ENCODE measurements at regions of chr11 and their contacts with region 1.

Region 1: DNA sequence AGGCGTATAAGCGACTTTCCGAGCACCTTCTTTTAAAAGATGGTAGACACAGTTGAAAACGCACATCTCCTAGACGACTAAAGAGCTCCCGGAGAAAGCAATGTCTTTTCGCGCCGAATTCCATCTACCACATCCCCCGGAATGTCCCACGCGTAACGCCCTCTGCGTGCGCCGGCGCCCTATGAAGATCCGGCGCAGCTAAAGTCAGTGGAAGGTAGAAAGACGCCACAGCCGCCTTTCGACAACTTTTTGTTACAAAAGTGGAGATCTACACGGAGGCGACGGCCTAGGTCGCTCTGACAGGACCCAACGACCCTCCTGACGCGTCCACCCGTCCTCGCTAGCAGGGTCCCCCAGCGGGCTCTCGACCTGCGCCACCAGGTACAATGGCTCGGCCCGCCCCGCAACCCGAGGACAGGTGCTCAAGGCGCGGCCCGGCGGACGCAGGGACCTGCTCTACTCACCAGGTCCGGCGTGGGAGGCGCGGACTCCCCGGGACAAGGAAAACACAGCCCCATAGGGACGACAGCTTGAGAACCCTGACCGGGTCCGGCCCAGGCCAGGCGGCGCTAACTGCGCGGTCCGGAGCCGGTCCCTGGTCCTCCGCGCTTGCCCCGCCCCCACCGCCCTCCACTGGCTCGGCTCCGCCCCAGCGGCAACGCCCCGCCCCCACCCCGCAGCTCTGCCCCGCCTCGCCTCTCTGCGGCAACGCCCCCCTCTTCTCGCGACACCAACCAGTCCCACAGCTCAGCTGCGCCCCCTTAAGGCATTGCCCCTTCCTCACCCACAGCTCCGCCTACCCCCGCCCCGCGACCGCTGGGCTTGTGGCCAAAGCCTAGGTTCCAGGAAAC is at the start of gene SVIP:
- DNase-seq: peak; percentile 93
- H3K4me3 Mint-ChIP-seq: peak within 1 kb of the TSS; percentile 91
- H3K27ac Mint-ChIP-seq: peak within 1 kb of the TSS; percentile 84
- H3K4me1 Mint-ChIP-seq: peaks cover 21% of the 10 kb centered on the region
- H3K27me3 Mint-ChIP-seq: no peaks in the 10 kb centered on the region
- total RNA-seq, gene SVIP: 26.9 to 27.5 TPM

Region 2: DNA sequence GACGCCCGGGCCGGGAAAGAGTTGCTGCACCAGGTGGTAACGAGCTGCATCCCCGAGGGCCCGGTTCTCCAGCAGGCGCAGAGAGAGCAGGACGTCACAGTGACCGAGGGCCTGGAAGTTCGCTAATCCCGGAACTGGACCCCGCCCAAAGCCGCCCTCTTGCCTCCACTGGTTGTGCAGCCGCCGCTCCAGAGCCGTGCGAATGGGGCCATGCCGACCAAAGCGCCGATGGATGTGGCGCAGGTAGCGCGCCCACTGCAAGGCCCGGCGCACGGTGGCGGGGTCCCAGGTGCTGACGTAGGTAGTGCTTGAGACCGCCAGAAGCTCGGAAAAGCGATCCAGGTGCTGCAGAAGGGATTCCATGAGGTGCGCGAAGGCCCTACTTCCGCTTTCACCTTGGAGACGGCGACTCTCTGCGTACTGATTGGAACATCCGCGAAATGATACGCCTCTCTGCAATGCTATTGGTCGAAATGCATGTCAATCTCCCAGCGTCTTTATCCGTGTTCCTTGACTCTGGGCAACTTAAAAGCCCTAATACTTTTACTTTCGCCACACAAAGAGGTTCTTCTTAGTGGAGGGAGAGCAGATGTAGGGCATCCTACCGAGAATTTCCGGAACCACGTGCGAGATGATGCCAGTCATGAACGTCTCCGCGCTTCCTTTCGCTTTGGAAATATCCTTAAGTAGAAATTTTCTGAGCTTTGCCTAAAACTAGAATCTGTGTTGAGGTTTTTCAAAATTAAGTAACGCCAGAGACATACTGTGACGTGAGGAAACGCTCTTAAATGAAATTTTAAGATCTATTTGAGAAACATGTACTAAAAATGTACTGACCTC is 203.8 kb before region 1 on chr11 and contains the start of gene FANCF:
- CTCF ChIA-PET with region 1: interaction called, 7 read pairs
- POLR2A ChIA-PET with region 1: interaction called, 23 read pairs
- DNase-seq: peak; percentile 94
- H3K4me3 Mint-ChIP-seq: peak within 1 kb of the TSS; percentile 98
- H3K27ac Mint-ChIP-seq: peak within 1 kb of the TSS; percentile 96
- H3K4me1 Mint-ChIP-seq: peaks cover 26% of the 10 kb centered on the region
- H3K27me3 Mint-ChIP-seq: no peaks in the 10 kb centered on the region
- total RNA-seq, gene FANCF: 13.2 to 13.6 TPM

Region 3: GRCh38 chr11:22768281-22768680 is 61.2 kb before region 1 on chr11:
- CTCF ChIA-PET with region 1: no interaction called
- POLR2A ChIA-PET with region 1: no interaction called
- DNase-seq: no peak
- H3K4me3 Mint-ChIP-seq: no peak overlapping the region
- H3K27ac Mint-ChIP-seq: no peak overlapping the region
- H3K4me1 Mint-ChIP-seq: no peaks in the 10 kb centered on the region
- H3K27me3 Mint-ChIP-seq: peaks cover 4% of the 10 kb centered on the region

Region 4: DNA sequence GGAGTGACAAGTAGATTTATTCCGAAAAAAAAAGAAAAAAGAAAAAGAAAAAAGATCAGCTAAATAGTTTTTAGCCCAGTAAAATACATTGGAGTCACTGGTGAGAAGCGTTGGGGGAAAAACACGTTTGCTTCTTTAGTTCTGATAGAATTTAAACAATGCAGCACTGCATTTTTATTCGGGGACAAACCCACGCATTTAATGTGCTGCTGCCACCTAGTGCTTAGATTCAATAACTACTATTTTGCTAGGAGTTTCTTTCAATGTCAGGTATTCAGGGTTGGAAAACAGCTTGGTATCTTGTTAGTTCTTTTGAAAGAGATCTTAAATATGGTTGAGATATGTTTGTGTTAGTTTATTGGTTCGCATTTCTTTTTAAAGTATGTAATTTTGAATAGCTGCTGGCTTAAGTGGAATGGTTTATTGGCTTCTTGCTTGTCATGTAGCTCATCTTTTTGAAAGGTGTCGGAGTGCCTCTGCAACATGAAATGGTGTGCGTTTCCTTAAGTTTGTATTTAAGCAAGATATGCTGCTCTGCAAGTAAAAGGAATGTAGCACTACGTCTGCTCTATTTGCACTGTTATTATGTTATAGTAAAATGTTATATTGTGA is 41.8 kb before region 1 on chr11:
- CTCF ChIA-PET with region 1: interaction called, 13 read pairs
- POLR2A ChIA-PET with region 1: interaction called, 3 read pairs
- DNase-seq: no peak
- H3K4me3 Mint-ChIP-seq: no peak overlapping the region
- H3K27ac Mint-ChIP-seq: no peak overlapping the region
- H3K4me1 Mint-ChIP-seq: no peaks in the 10 kb centered on the region
- H3K27me3 Mint-ChIP-seq: peaks cover 2% of the 10 kb centered on the region

Region 5: GRCh38 chr11:22860241-22860640 is 30.8 kb after region 1 on chr11 and contains the start of gene CCDC179:
- CTCF ChIA-PET with region 1: no interaction called
- POLR2A ChIA-PET with region 1: no interaction called
- DNase-seq: no peak
- H3K4me3 Mint-ChIP-seq: no peak within 1 kb of the TSS
- H3K27ac Mint-ChIP-seq: no peak within 1 kb of the TSS
- H3K4me1 Mint-ChIP-seq: no peaks in the 10 kb centered on the region
- H3K27me3 Mint-ChIP-seq: no peaks in the 10 kb centered on the region
- total RNA-seq, gene CCDC179: not detected

Region 6: GRCh38 chr11:22875869-22876473 is 46.5 kb after region 1 on chr11:
- CTCF ChIA-PET with region 1: interaction called, 15 read pairs
- POLR2A ChIA-PET with region 1: no interaction called
- DNase-seq: peak; percentile 61
- H3K4me3 Mint-ChIP-seq: no peak overlapping the region
- H3K27ac Mint-ChIP-seq: no peak overlapping the region
- H3K4me1 Mint-ChIP-seq: no peaks in the 10 kb centered on the region
- H3K27me3 Mint-ChIP-seq: no peaks in the 10 kb centered on the region

Region 7: DNA sequence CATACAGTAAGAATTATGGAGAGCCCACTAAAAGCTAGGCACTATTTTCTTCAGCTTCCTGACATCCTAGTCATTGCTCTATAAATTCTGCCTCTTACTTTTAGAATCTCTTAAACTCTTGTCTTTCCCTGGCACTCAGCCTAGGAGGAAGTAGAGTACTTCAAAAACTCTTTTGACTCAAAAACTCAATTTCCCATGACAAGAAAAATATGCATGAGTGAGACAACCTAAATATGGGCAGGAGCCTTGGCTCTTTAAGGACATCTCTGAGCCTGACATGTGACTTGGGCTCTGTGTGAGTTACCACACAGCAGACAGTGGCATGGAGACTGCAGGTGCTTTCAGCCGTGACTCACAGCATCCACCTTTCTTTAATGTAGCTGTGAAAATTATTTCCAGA is 128.3 kb after region 1 on chr11:
- CTCF ChIA-PET with region 1: no interaction called
- POLR2A ChIA-PET with region 1: no interaction called
- DNase-seq: no peak
- H3K4me3 Mint-ChIP-seq: no peak overlapping the region
- H3K27ac Mint-ChIP-seq: no peak overlapping the region
- H3K4me1 Mint-ChIP-seq: no peaks in the 10 kb centered on the region
- H3K27me3 Mint-ChIP-seq: no peaks in the 10 kb centered on the region

Region 8: DNA sequence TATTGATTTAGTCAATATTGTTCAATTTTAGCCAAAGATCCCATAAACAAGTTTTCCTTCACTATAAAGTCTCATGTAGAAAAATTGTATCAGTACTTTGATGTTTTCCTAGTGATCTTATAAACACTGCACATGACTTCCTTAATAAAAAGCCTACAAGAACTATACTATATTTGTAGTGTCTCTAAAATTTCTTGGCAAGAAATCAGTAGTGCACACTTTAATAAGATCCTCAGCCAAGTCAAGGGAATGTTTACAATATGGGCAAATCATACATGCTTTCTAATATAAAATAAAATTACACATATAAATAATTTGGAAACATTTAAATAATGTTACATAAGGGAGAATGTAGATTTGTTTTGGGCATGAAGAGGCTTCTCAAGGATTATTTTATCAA is 233.8 kb after region 1 on chr11:
- CTCF ChIA-PET with region 1: no interaction called
- POLR2A ChIA-PET with region 1: no interaction called
- DNase-seq: no peak
- H3K4me3 Mint-ChIP-seq: no peak overlapping the region
- H3K27ac Mint-ChIP-seq: no peak overlapping the region
- H3K4me1 Mint-ChIP-seq: no peaks in the 10 kb centered on the region
- H3K27me3 Mint-ChIP-seq: no peaks in the 10 kb centered on the region

Measured in activated CD4-positive, alpha-beta memory T cell treated with anti-CD3 and anti-CD28 coated beads, Interleukin-2, amount 10 ng/mL, durations not matched to agents 7 days and 5 days (primary cell).